CD4-positive, alpha-beta T cell (primary cell): ENCODE measurements at regions of chr12 and their contacts with region 1.

Region 1: GRCh38 chr12:27523642-27524493 is at the start of gene PPFIBP1:
- DNase-seq: peak; percentile 94 to 100 (median 98)
- ATAC-seq: peak; percentile 95
- H3K4me3 ChIP-seq: peak within 1 kb of the TSS; percentile 75
- H3K4me3 Mint-ChIP-seq: peak within 1 kb of the TSS; percentile 99
- H3K27ac ChIP-seq: peak within 1 kb of the TSS; percentile 36 to 54
- H3K27ac Mint-ChIP-seq: peak within 1 kb of the TSS; percentile 96
- H3K4me1 ChIP-seq: peaks cover 16% of the 10 kb centered on the region
- H3K4me1 Mint-ChIP-seq: peaks cover 40% of the 10 kb centered on the region
- H3K27me3 ChIP-seq: no peaks in the 10 kb centered on the region
- H3K27me3 Mint-ChIP-seq: no peaks in the 10 kb centered on the region
- CTCF ChIP-seq: no peak
- total RNA-seq, gene PPFIBP1: 2.6 to 2.9 TPM

Region 2: GRCh38 chr12:26113853-26114719 is 1409.8 kb before region 1 on chr12:
- CTCF ChIA-PET with region 1: no interaction called
- POLR2A ChIA-PET with region 1: no interaction called
- intact Hi-C with region 1: loop called in 1 of 2 experiments (anchors 10 kb)
- DNase-seq: peak; percentile 45 to 87 (median 66)
- ATAC-seq: peak; percentile 76
- H3K4me3 ChIP-seq: peak overlapping the region; percentile 57
- H3K4me3 Mint-ChIP-seq: peak overlapping the region; percentile 87
- H3K27ac ChIP-seq: no peak overlapping the region
- H3K27ac Mint-ChIP-seq: peak overlapping the region; percentile 45
- H3K4me1 ChIP-seq: peaks cover 12% of the 10 kb centered on the region
- H3K4me1 Mint-ChIP-seq: peaks cover 4% of the 10 kb centered on the region
- H3K27me3 ChIP-seq: peaks cover 3 to 20% of the 10 kb centered on the region in 2 experiments
- H3K27me3 Mint-ChIP-seq: peaks cover 32% of the 10 kb centered on the region
- CTCF ChIP-seq: no peak

Region 3: GRCh38 chr12:27243804-27244683 is 279.8 kb before region 1 on chr12 and contains the start of gene STK38L:
- CTCF ChIA-PET with region 1: no interaction called
- POLR2A ChIA-PET with region 1: no interaction called
- intact Hi-C with region 1: loop called in 1 of 2 experiments (anchors 5 kb)
- DNase-seq: peak; percentile 87 to 99 (median 94)
- ATAC-seq: peak; percentile 95
- H3K4me3 ChIP-seq: peak within 1 kb of the TSS; percentile 93
- H3K4me3 Mint-ChIP-seq: peak within 1 kb of the TSS; percentile 99
- H3K27ac ChIP-seq: peak within 1 kb of the TSS; percentile 60 to 77
- H3K27ac Mint-ChIP-seq: peak within 1 kb of the TSS; percentile 92
- H3K4me1 ChIP-seq: peaks cover 15% of the 10 kb centered on the region
- H3K4me1 Mint-ChIP-seq: peaks cover 64% of the 10 kb centered on the region
- H3K27me3 ChIP-seq: no peaks in the 10 kb centered on the region
- H3K27me3 Mint-ChIP-seq: no peaks in the 10 kb centered on the region
- CTCF ChIP-seq: no peak
- total RNA-seq, gene STK38L: 18.3 to 21.0 TPM

Region 4: GRCh38 chr12:27396216-27396815 is 127.6 kb before region 1 on chr12:
- CTCF ChIA-PET with region 1: no interaction called
- POLR2A ChIA-PET with region 1: no interaction called
- intact Hi-C with region 1: no loop called
- DNase-seq: no peak
- ATAC-seq: no peak
- H3K4me3 ChIP-seq: no peak overlapping the region
- H3K4me3 Mint-ChIP-seq: no peak overlapping the region
- H3K27ac ChIP-seq: no peak overlapping the region
- H3K27ac Mint-ChIP-seq: no peak overlapping the region
- H3K4me1 ChIP-seq: no peaks in the 10 kb centered on the region
- H3K4me1 Mint-ChIP-seq: no peaks in the 10 kb centered on the region
- H3K27me3 ChIP-seq: no peaks in the 10 kb centered on the region
- H3K27me3 Mint-ChIP-seq: peaks cover 4% of the 10 kb centered on the region
- CTCF ChIP-seq: no peak

Region 5: DNA sequence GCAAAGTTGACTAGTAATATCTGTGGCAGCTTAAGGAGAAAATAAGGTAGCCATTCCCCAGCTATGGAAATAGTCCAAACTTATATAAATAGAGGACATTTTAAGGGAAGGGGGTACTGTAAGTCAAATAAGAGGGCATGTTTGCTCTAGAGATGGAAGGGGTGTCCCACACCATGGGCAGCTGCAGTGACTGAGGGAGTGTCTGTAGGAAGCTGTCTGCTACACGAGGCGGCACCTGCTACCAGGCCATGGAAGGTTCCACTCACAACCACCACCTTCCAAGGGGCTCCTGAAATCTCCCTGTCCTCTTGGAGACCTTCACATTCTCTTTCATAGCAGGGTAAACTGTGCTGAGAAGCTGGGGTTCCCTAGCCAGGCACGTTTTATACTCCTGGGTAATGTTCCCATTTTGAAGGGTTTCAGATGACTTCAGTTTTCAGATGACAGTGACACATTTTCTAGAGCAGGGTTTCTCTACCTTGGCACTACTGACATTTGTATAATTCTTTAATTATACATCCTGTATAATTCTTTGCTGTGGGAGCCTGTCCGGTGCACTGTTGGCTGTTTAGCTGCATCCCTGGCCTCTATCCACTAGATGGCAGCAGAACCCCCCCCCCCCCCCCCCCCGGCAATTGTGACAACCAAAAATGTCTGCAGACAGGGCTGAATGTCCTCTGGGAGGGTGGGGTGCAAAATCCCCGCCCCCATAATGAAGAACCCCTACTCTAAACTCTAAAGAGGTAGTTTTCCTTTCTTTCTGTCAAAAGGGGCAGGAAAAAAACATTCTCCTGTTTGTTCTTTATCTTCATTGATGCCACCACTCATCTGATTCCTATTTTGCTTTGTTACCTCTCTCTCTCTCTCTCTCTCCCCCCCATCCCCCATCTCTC is 88.9 kb before region 1 on chr12:
- CTCF ChIA-PET with region 1: no interaction called
- POLR2A ChIA-PET with region 1: interaction called, 6 read pairs
- intact Hi-C with region 1: loop called in 1 of 2 experiments (anchors 2 kb)
- DNase-seq: peak in 10 of 14 experiments; percentile 1 to 56 (median 6)
- ATAC-seq: peak; percentile 74
- H3K4me3 ChIP-seq: no peak overlapping the region
- H3K4me3 Mint-ChIP-seq: no peak overlapping the region
- H3K27ac ChIP-seq: no peak overlapping the region
- H3K27ac Mint-ChIP-seq: no peak overlapping the region
- H3K4me1 ChIP-seq: no peaks in the 10 kb centered on the region
- H3K4me1 Mint-ChIP-seq: peaks cover 8% of the 10 kb centered on the region
- H3K27me3 ChIP-seq: no peaks in the 10 kb centered on the region
- H3K27me3 Mint-ChIP-seq: peaks cover 17% of the 10 kb centered on the region
- CTCF ChIP-seq: peak; percentile 47

Region 6: GRCh38 chr12:27710592-27711316 is 186.9 kb after region 1 on chr12 and contains the start of gene MRPS35:
- CTCF ChIA-PET with region 1: no interaction called
- POLR2A ChIA-PET with region 1: interaction called, 5 read pairs
- intact Hi-C with region 1: loop called (anchors 2 to 5 kb)
- DNase-seq: peak; percentile 83 to 95 (median 88)
- ATAC-seq: peak; percentile 96
- H3K4me3 ChIP-seq: peak within 1 kb of the TSS; percentile 71
- H3K4me3 Mint-ChIP-seq: peak within 1 kb of the TSS; percentile 98
- H3K27ac ChIP-seq: peak within 1 kb of the TSS; percentile 60 to 69
- H3K27ac Mint-ChIP-seq: peak within 1 kb of the TSS; percentile 96
- H3K4me1 ChIP-seq: peaks cover 25% of the 10 kb centered on the region
- H3K4me1 Mint-ChIP-seq: peaks cover 41% of the 10 kb centered on the region
- H3K27me3 ChIP-seq: no peaks in the 10 kb centered on the region
- H3K27me3 Mint-ChIP-seq: no peaks in the 10 kb centered on the region
- CTCF ChIP-seq: no peak
- total RNA-seq, gene MRPS35: 22.1 to 23.9 TPM

Region 7: DNA sequence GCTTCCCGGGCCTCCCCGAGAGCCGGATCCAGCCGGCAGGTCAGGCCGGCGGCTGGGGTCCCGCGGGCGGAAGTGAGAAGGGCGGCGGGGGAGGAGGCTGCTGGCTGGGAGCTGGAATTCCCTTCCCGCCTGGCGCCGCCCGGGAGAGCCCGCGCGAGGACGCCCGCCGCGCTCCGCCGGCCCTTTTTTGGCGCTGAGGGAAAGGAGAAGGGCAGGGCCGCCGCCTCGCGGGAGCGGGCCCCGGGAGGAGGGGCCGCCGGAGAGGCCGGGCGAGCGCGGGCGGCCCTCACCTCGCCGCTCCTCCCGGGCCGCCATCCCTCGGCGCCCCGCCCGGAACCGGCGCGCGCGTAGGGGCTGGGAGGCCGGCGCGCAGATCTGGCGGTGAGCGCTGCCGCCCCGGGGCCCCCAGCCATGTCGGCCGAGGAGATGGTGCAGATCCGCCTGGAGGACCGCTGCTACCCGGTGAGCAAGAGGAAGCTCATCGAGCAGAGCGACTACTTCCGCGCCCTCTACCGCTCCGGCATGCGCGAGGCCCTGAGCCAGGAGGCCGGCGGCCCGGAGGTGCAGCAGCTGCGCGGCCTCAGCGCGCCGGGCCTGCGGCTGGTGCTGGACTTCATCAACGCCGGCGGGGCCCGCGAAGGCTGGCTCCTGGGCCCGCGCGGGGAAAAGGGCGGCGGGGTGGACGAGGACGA is 256.2 kb after region 1 on chr12 and contains the starts of genes KLHL42 and MANSC4:
- CTCF ChIA-PET with region 1: no interaction called
- POLR2A ChIA-PET with region 1: no interaction called
- intact Hi-C with region 1: loop called in 1 of 2 experiments (anchors 2 kb)
- DNase-seq: peak; percentile 47 to 84 (median 65)
- ATAC-seq: peak; percentile 81
- H3K4me3 ChIP-seq: peak within 1 kb of the TSS; percentile 80
- H3K4me3 Mint-ChIP-seq: peak within 1 kb of the TSS; percentile 90
- H3K27ac ChIP-seq: peak within 1 kb of the TSS in 1 of 2 donors; percentile 22
- H3K27ac Mint-ChIP-seq: peak within 1 kb of the TSS; percentile 80
- H3K4me1 ChIP-seq: peaks cover 27% of the 10 kb centered on the region
- H3K4me1 Mint-ChIP-seq: peaks cover 40% of the 10 kb centered on the region
- H3K27me3 ChIP-seq: no peaks in the 10 kb centered on the region
- H3K27me3 Mint-ChIP-seq: no peaks in the 10 kb centered on the region
- CTCF ChIP-seq: no peak
- total RNA-seq, gene KLHL42: 12.8 to 13.2 TPM
- total RNA-seq, gene MANSC4: not detected